PC-9 (cell line): ENCODE measurements at regions of chr2 and their contacts with region 1.

Region 1: GRCh38 chr2:68441179-68441993 is 25.7 kb downstream of the FBXO48 start:
- DNase-seq: peak; percentile 59 to 73
- H3K4me3 ChIP-seq: no peak overlapping the region
- H3K27ac ChIP-seq: no peak overlapping the region
- H3K4me1 ChIP-seq: no peaks in the 10 kb centered on the region
- H3K27me3 ChIP-seq: 0 out of 2 replicates have a peak, but pooled peaks cover 4% of the 10 kb centered on the region
- CTCF ChIP-seq: peak; percentile 96

Region 2: DNA sequence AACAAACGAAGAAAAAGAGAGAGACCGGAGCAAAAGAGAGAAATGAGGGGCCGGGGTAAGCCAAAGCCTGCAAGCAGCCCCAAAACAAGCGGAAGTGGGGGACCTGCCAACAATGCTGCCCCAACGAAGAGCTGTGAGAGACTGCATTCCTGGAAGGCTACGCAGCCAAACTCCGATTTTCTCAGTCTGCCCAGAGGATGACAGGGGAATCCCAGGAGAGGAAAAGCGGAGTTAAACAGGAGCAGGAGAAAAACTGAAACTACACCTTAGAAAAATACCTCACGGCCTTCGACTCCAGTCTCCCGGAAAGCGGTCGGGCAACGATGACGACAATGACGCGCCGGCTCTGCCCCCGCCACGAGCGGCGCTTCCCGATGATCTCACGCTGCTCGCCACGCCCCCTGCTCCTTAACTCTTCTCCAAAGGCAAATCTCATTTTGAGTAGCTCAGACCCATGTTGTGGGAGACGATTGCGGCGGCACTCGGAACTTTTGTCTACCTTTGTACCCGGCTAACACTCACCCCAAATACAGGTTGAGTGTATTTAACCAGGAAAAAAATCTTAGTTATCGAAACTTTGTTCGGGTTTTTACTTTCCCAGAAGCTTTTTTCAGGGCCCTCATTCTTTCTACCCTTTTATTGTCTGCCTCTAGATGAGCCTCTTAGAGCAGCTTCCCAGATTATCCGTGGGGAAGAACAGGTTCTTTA is 378.6 kb before region 1 on chr2 and contains the start of gene C1D:
- CTCF ChIA-PET with region 1: no interaction called
- POLR2A ChIA-PET with region 1: no interaction called
- intact Hi-C with region 1: loop called (anchors 5 kb)
- DNase-seq: peak; percentile 79 to 91
- H3K4me3 ChIP-seq: peak within 1 kb of the TSS; percentile 89
- H3K27ac ChIP-seq: peak within 1 kb of the TSS; percentile 83
- H3K4me1 ChIP-seq: peaks cover 10% of the 10 kb centered on the region
- H3K27me3 ChIP-seq: no peaks in the 10 kb centered on the region
- CTCF ChIP-seq: no peak
- total RNA-seq, gene C1D: 22.3 and 24.8 TPM in 2 replicates

Region 3: DNA sequence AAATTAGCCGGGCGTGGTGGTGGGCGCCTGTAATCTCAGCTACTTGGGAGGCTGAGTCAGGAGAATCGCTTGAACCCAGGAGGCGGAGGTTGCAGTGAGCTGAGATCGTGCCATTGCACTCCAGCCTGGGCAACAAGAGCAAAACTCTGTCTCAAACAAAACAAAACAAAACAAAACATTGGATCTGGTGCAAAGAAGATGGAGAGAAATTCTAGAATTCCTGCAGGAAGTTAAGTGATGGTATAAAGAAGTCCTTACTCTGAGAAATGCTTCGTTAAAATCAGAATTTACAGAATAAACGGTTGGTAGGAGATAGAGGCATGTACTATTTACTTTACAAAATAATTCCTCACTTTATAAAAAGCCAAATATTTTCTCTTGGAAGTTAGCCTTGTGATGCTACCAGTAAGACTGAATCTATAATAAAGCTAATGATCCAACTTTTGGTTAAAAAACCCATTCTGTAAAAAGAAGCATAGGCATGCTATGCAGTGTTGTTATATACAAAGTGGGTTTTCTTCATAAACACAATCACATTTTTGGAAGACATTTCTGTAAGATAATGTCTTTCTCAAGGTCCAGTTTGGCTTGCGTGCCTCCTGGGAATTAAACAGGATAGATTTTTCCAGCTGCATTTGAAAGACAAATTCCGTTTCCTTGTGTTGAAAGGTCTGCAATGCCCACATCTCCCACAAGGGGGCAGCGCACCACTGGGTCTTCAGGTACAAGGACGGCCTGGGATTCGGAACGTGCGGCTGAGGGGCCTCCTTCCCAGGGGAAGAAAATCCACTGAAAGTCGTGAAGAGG is 319.3 kb before region 1 on chr2:
- CTCF ChIA-PET with region 1: no interaction called
- POLR2A ChIA-PET with region 1: no interaction called
- intact Hi-C with region 1: loop called (anchors 1 kb)
- DNase-seq: peak; percentile 68 to 81
- H3K4me3 ChIP-seq: no peak overlapping the region
- H3K27ac ChIP-seq: no peak overlapping the region
- H3K4me1 ChIP-seq: no peaks in the 10 kb centered on the region
- H3K27me3 ChIP-seq: no peaks in the 10 kb centered on the region
- CTCF ChIP-seq: peak; percentile 99

Region 4: DNA sequence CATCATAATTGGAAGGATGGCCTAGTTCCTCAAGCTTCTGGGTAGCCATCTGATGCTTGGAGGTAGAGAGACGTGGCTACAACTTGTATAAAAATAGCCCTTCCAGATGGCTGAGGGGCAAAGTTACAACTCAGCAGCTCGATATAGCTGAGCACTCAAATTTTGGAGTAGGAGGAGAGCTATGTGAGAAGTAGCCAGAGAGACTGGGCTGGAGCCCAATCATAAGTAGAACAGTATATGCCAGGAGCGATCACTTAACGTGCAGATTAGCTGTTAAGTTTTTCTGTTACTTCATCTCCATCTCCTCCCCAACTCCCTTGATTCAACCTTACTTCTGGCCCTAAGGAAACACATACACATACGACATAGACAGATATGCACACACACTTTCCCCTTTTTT is 150.5 kb before region 1 on chr2:
- CTCF ChIA-PET with region 1: no interaction called
- POLR2A ChIA-PET with region 1: no interaction called
- intact Hi-C with region 1: loop called (anchors 5 kb)
- DNase-seq: no peak
- H3K4me3 ChIP-seq: no peak overlapping the region
- H3K27ac ChIP-seq: no peak overlapping the region
- H3K4me1 ChIP-seq: no peaks in the 10 kb centered on the region
- H3K27me3 ChIP-seq: no peaks in the 10 kb centered on the region
- CTCF ChIP-seq: no peak

Region 5: GRCh38 chr2:68362069-68362468 is 79.3 kb before region 1 on chr2:
- CTCF ChIA-PET with region 1: no interaction called
- POLR2A ChIA-PET with region 1: no interaction called
- intact Hi-C with region 1: loop called (anchors 1 kb)
- DNase-seq: peak; percentile 33 to 59
- H3K4me3 ChIP-seq: no peak overlapping the region; the same call in 1 of the 2 replicates
- H3K27ac ChIP-seq: no peak overlapping the region
- H3K4me1 ChIP-seq: no peaks in the 10 kb centered on the region
- H3K27me3 ChIP-seq: no peaks in the 10 kb centered on the region
- CTCF ChIP-seq: peak; percentile 88

Region 6: GRCh38 chr2:68452168-68452900 is 10.9 kb after region 1 on chr2:
- CTCF ChIA-PET with region 1: no interaction called
- POLR2A ChIA-PET with region 1: no interaction called
- intact Hi-C with region 1: no loop called
- DNase-seq: no peak
- H3K4me3 ChIP-seq: no peak overlapping the region
- H3K27ac ChIP-seq: no peak overlapping the region
- H3K4me1 ChIP-seq: no peaks in the 10 kb centered on the region
- H3K27me3 ChIP-seq: no peaks in the 10 kb centered on the region
- CTCF ChIP-seq: no peak